ENCODE measurements at regions of chr3 and their contacts with region 1.

Region 1: DNA sequence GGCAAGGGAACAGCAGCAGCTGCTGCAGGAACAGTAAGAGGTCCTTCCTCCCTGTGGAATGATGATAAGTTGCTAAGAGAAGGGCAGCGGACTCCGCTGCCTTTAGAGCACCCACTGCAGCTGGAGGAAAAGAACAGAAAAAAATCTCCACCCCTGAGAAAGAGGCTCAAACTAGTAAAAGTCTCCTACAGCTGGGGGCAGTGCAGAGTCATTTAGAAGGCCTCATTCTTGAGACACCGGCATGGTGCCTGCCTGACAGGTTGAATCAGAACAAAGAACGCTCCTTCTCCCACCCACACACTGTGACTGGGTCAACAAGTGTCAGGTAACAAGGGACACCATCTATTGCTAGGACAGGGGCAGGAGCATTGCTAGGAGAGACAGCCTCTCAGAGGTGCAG is 188.4 kb downstream of the ABHD5 start:
- DNase-seq: no peak
- H3K4me3 ChIP-seq: no peak overlapping the region
- H3K27ac ChIP-seq: no peak overlapping the region
- H3K4me1 ChIP-seq: no peaks in the 10 kb centered on the region
- H3K27me3 ChIP-seq: no peaks in the 10 kb centered on the region
- CTCF ChIP-seq: peak in 1 of 3 donors; percentile 12
- POLR2A ChIP-seq: no peak

Region 2: GRCh38 chr3:43852066-43852465 is 27.1 kb before region 1 on chr3:
- intact Hi-C with region 1: loop called (anchors 2 kb)
- DNase-seq: no peak
- H3K4me3 ChIP-seq: no peak overlapping the region
- H3K27ac ChIP-seq: no peak overlapping the region
- H3K4me1 ChIP-seq: no peaks in the 10 kb centered on the region
- H3K27me3 ChIP-seq: peaks cover 0 to 5% of the 10 kb centered on the region in 2 donors
- CTCF ChIP-seq: no peak
- POLR2A ChIP-seq: no peak

Measured in breast epithelium (tissue), 4 donors.